ENCODE measurements at regions of chr19 and their contacts with region 1.

Region 1: DNA sequence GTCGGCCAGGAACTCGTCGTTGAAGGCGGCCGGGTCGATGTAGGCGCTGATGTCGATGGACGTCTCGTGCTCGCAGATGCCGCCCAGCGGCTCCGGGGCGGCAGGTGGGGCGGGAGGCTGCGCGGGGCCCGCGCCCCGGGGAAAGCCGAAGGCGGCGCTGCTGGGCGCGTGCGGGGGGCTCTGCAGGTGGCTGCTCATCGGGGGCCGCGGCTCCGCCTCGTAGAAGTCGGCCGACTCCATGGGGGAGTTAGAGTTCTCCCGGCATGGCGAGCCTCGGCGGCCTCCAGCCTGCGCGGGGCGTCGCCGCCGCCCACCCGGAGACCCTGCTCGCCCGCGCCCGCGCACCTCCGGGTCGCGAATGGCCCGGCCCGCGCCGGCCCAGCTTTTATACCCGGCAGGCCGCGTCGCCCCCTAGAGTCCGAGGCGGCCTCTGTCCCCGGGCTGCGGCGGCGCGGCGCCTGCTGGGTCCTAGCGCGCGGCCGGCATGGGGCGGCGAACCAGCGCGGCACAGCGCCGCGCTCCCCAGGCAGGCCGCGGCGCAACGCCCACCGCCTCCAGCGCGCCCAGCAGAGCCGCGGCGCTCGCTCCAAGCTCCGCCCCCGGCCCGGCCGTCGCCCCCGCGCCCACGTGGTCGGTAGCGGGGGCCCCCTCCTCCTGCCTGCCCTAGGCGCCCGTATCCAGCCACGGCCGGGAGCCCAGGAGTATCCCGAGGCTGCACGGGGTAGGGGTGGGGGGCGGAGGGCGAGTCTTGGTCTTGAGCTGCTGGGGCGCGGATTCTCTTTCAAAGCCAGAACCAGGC is at the start of gene CEBPA:
- DNase-seq: peak; percentile 88 to 93
- ATAC-seq: peak; percentile 81 to 89 (median 86)
- H3K4me3 ChIP-seq: peak within 1 kb of the TSS; percentile 86
- H3K27ac ChIP-seq: peak within 1 kb of the TSS; percentile 91
- H3K4me1 ChIP-seq: peaks cover 26% of the 10 kb centered on the region
- H3K27me3 ChIP-seq: no peaks in the 10 kb centered on the region
- CTCF ChIP-seq: peak; percentile 60
- total RNA-seq, gene CEBPA: 7.7 to 50.7 (median 11.5) TPM

Region 2: DNA sequence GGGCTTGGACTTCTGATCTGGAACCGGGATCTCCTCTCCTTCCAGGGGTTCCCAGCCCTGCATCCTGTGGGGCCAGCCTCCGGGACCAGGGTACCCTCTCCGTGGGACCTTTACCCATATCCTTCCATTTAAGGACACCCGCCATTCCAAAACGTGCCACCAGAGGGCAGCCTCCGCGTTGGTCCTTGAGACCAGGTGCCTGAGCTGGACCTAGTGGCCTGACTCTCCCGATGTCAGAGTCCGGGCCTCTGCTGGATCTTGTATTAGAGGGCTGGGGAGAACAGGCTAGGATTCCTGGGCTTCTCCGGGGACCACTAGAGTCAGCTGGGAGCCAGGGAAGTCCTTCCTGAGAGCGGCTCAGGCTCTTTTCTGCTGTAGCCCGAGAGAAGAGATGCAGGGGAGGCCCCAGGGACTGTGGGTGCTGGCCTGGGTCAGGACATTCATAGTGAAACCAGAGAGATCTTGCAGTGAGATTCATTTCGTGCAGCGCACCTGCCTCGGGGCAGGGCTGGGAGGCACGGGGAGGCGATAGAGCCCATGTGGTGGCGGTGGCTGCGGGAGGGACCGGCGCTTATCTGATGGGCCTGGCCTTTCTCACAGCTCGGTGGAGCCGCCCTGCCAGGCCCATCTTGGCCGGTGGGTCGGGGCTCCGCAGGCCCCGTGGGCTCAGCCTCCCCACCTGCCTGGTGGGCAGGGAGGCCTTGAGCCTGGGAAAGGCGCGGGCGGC is 66.9 kb before region 1 on chr19:
- intact Hi-C with region 1: loop called in 1 of 2 experiments (anchors 5 kb)
- DNase-seq: peak; percentile 76 to 87
- ATAC-seq: peak; percentile 78 to 86 (median 79)
- H3K4me3 ChIP-seq: no peak overlapping the region
- H3K27ac ChIP-seq: no peak overlapping the region
- H3K4me1 ChIP-seq: no peaks in the 10 kb centered on the region
- H3K27me3 ChIP-seq: peaks cover 0 to 14% (median 0%) of the 10 kb centered on the region in 3 donors
- CTCF ChIP-seq: peak; percentile 93

Region 3: DNA sequence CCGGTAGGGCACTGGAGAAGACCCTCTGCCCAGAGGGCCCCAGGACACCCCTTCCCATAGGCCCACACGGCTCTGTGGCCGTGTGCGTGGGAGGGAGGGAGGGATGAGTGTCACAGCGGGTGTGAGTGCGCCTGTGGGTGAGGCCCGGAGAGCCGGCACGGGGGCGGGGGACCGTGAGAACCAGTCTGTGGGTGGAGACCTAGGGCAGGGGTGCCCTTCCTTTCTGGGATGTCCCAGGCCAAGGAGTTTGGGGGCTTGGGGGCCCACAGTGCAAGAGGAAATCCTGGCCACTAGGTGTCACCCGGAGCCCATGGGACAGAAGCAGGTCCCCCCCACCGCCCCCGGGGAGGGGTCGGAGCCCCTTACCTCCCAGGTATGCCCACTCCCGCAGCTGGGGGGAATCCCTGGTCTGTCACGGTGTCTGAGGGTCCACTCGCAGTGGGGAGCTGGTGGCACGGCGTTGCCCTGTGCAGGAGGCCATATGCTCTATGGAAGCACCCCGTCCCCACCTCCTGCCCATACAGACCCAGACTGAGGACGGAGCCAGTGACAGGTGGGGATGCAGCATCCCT is 60.8 kb before region 1 on chr19:
- intact Hi-C with region 1: loop called (anchors 2 to 5 kb)
- DNase-seq: peak in 1 of 2 donors; percentile 60
- ATAC-seq: peak; percentile 49 to 89 (median 62)
- H3K4me3 ChIP-seq: no peak overlapping the region
- H3K27ac ChIP-seq: no peak overlapping the region
- H3K4me1 ChIP-seq: no peaks in the 10 kb centered on the region
- H3K27me3 ChIP-seq: no peaks in the 10 kb centered on the region
- CTCF ChIP-seq: peak; percentile 81

Region 4: DNA sequence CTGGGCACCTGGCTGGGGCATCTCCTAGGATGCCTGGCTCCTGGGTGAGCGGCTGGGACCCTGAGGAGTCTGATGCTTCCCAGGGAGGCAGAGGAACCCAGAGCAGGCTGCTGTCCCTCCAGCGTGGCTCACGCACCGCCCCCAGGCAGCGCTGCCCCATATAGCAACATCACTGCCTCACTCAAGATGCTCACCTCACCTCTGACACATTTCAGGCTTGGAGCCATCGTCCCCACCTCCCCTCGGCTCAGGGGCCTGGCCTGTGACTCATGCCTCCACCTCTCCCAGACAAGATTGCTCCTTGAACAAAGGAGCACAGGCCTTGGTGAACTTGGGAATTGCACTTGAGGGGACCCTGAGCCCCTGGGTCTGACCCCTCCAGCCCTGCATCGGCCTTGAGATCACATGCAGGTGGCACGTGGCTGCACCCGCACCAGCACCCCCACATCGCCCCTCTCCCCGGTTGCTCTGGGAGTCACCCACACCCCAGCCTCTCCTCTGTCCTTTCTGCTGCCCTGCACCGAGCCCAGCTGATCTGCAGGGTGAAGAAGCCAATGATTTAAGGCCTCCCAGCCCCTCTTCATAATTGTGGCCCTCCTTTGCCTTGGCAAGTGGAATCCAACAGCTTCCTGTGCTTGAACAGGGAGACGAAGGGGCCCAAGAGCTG is 11.3 kb before region 1 on chr19:
- intact Hi-C with region 1: no loop called
- DNase-seq: peak in 1 of 2 donors; percentile 34
- ATAC-seq: no peak
- H3K4me3 ChIP-seq: no peak overlapping the region
- H3K27ac ChIP-seq: no peak overlapping the region
- H3K4me1 ChIP-seq: peaks cover 18% of the 10 kb centered on the region
- H3K27me3 ChIP-seq: no peaks in the 10 kb centered on the region
- CTCF ChIP-seq: no peak

Region 5: GRCh38 chr19:33373701-33374421 is 71.5 kb after region 1 on chr19 and contains the start of gene CEBPG:
- intact Hi-C with region 1: loop called (anchors 5 kb)
- DNase-seq: peak; percentile 71 to 87
- ATAC-seq: peak; percentile 52 to 69 (median 60)
- H3K4me3 ChIP-seq: peak within 1 kb of the TSS; percentile 87
- H3K27ac ChIP-seq: peak within 1 kb of the TSS; percentile 97
- H3K4me1 ChIP-seq: peaks cover 43% of the 10 kb centered on the region
- H3K27me3 ChIP-seq: no peaks in the 10 kb centered on the region
- CTCF ChIP-seq: peak; percentile 35
- total RNA-seq, gene CEBPG: 29.9 to 54.5 (median 49.5) TPM

Region 6: GRCh38 chr19:33388725-33389420 is 86.5 kb after region 1 on chr19:
- intact Hi-C with region 1: loop called (anchors 5 kb)
- DNase-seq: peak; percentile 71 to 86
- ATAC-seq: peak; percentile 55 to 76 (median 72)
- H3K4me3 ChIP-seq: peak overlapping the region; percentile 35
- H3K27ac ChIP-seq: peak overlapping the region; percentile 83
- H3K4me1 ChIP-seq: peaks cover 78% of the 10 kb centered on the region
- H3K27me3 ChIP-seq: no peaks in the 10 kb centered on the region
- CTCF ChIP-seq: no peak

Measured in psoas muscle (tissue), 8 donors.